WTC11 (cell line): ENCODE measurements at regions of chr2 and their contacts with region 1.

Region 1: DNA sequence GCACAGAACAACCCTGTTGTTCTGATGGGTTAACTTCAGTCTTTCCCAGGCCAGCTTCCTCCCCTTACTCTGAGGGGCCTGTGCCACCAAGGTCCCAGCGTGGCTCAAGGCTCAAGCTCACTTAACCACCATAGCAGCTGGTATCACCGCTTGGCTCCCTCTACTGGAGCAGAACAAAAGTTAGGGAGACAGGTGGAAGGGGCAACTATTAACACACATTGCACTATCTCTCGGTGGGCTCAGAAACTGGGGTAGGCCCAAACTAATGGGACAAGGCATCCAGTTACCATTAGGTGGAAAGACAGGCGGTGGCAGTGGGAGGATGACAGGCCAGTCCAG is 88.7 kb upstream of the ATL2 start:
- DNase-seq: peak; percentile 59
- ATAC-seq: peak; percentile 97
- H3K4me3 Mint-ChIP-seq: no peak overlapping the region
- H3K27ac Mint-ChIP-seq: no peak overlapping the region
- H3K4me1 Mint-ChIP-seq: peaks cover 4% of the 10 kb centered on the region
- H3K27me3 Mint-ChIP-seq: no peaks in the 10 kb centered on the region
- CTCF ChIP-seq: 0 out of 2 replicates have a peak, but pooled peaks have one; percentile 19

Region 2: DNA sequence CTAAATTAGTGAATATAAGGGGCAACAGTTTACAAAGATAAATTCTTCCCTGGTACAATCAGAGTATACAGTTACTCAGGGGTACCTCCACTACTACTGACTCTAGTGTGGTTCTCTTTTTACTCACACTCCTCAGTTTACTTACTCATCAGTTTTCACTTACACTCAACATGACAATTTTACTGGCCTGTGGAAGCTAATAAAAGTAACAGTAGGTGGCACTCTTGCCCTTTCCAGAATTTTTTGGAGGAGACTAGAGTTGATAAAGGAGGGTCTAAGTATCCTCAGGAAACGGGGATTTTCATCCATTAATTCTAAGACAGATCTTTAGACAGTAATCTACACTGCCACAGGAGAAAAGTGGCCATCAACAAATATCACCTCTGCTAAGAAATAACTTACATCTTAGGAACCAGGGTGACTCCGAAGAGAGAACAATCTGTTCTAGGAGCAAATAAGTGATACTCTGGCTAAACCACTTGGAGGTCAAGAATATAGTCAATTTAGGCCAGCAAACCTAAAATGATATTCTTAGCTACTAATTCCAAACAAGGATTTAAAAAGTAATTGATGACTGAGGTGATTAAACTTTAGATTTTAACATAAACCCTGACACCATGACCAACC is 149.9 kb before region 1 on chr2:
- CTCF ChIA-PET with region 1: interaction called, 32 read pairs
- POLR2A ChIA-PET with region 1: interaction called, 3 read pairs
- DNase-seq: no peak
- ATAC-seq: peak; percentile 74
- H3K4me3 Mint-ChIP-seq: no peak overlapping the region
- H3K27ac Mint-ChIP-seq: peak overlapping the region; percentile 5; the same call in 1 of the 2 replicates
- H3K4me1 Mint-ChIP-seq: no peaks in the 10 kb centered on the region
- H3K27me3 Mint-ChIP-seq: no peaks in the 10 kb centered on the region
- CTCF ChIP-seq: peak; percentile 25; the same call in 1 of the 2 replicates

Region 3: GRCh38 chr2:38352336-38352735 is 113.4 kb before region 1 on chr2:
- CTCF ChIA-PET with region 1: interaction called, 13 read pairs
- POLR2A ChIA-PET with region 1: no interaction called
- DNase-seq: no peak
- ATAC-seq: no peak
- H3K4me3 Mint-ChIP-seq: no peak overlapping the region
- H3K27ac Mint-ChIP-seq: peak overlapping the region; percentile 64
- H3K4me1 Mint-ChIP-seq: peaks cover 12% of the 10 kb centered on the region
- H3K27me3 Mint-ChIP-seq: no peaks in the 10 kb centered on the region
- CTCF ChIP-seq: no peak

Region 4: GRCh38 chr2:38444247-38444646 is 21.5 kb before region 1 on chr2:
- CTCF ChIA-PET with region 1: interaction called, 15 read pairs
- POLR2A ChIA-PET with region 1: no interaction called
- DNase-seq: peak; percentile 49
- ATAC-seq: peak; percentile 76
- H3K4me3 Mint-ChIP-seq: no peak overlapping the region
- H3K27ac Mint-ChIP-seq: peak overlapping the region; percentile 20
- H3K4me1 Mint-ChIP-seq: peaks cover 53% of the 10 kb centered on the region
- H3K27me3 Mint-ChIP-seq: peaks cover 31% of the 10 kb centered on the region
- CTCF ChIP-seq: no peak

Region 5: GRCh38 chr2:38508311-38509039 is 42.7 kb after region 1 on chr2:
- CTCF ChIA-PET with region 1: interaction called, 23 read pairs
- POLR2A ChIA-PET with region 1: interaction called, 4 read pairs
- DNase-seq: peak; percentile 93
- ATAC-seq: peak; percentile 91
- H3K4me3 Mint-ChIP-seq: no peak overlapping the region
- H3K27ac Mint-ChIP-seq: no peak overlapping the region
- H3K4me1 Mint-ChIP-seq: peaks cover 11% of the 10 kb centered on the region
- H3K27me3 Mint-ChIP-seq: peaks cover 17% of the 10 kb centered on the region
- CTCF ChIP-seq: peak; percentile 69